WTC11 (cell line): ENCODE measurements at regions of chr1 and their contacts with region 1.

Region 1: GRCh38 chr1:207997486-207998268 is 86.8 kb upstream of the CD34 start:
- DNase-seq: peak; percentile 75
- ATAC-seq: peak; percentile 84
- H3K4me3 Mint-ChIP-seq: no peak overlapping the region
- H3K27ac Mint-ChIP-seq: no peak overlapping the region
- H3K4me1 Mint-ChIP-seq: peaks cover 25% of the 10 kb centered on the region
- H3K27me3 Mint-ChIP-seq: peaks cover 10% of the 10 kb centered on the region
- CTCF ChIP-seq: peak; percentile 63

Region 2: GRCh38 chr1:207848234-207848633 is 149.4 kb before region 1 on chr1:
- CTCF ChIA-PET with region 1: no interaction called
- POLR2A ChIA-PET with region 1: no interaction called
- DNase-seq: no peak
- ATAC-seq: no peak
- H3K4me3 Mint-ChIP-seq: no peak overlapping the region
- H3K27ac Mint-ChIP-seq: no peak overlapping the region
- H3K4me1 Mint-ChIP-seq: peaks cover 8% of the 10 kb centered on the region
- H3K27me3 Mint-ChIP-seq: no peaks in the 10 kb centered on the region
- CTCF ChIP-seq: no peak

Region 3: DNA sequence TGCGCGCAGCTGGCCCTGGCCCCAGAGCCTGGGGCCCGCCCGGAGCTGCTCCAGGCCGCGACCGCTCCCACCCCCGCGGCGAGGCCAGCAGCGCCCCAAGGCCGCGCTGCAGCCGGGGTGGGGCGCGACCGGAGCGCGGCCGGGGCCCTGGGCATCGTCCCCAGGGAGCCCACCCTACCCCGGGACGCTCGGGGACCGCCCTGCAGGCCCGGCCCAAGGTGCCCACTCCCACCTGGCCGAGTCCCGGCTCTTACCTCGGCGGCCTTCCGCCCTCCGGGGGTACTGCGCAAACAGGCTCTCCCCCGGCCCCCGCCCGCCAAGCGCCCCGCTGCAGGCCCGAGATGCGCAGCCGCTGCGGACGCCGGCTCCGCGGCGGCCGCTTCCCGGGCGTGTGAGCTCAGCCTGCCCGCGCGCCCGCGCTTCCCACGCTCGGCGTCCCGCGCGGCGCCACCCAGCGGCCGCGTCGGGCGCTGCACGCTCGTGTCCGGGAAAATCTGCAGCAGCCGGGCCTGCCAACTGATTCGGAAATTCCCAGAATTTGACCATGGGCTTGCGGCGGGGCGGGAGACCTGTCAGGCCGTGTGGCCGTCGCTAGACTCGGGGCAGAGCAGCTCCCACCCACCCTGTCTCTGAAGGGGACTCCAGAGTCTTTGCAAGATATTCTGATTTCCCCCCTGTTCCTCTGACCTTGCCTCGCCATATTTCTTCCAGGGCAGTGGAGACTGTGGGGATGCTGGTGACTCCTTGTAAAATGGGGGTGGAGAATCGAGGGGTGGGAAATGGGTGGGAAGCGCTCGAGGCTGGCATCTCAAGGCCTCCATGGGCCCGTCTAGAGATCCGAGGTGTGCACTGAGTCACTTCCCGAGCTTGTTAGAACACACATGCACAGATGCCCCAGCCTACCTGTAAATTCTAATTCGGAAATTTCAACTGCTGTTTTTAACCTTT is 128.6 kb before region 1 on chr1:
- CTCF ChIA-PET with region 1: interaction called, 11 read pairs
- POLR2A ChIA-PET with region 1: no interaction called
- DNase-seq: peak; percentile 72
- ATAC-seq: peak; percentile 65
- H3K4me3 Mint-ChIP-seq: peak overlapping the region; percentile 71
- H3K27ac Mint-ChIP-seq: no peak overlapping the region
- H3K4me1 Mint-ChIP-seq: peaks cover 18% of the 10 kb centered on the region
- H3K27me3 Mint-ChIP-seq: peaks cover 28% of the 10 kb centered on the region
- CTCF ChIP-seq: peak; percentile 60

Region 4: GRCh38 chr1:207952617-207953542 is 44.8 kb before region 1 on chr1:
- CTCF ChIA-PET with region 1: no interaction called
- POLR2A ChIA-PET with region 1: no interaction called
- DNase-seq: no peak
- ATAC-seq: no peak
- H3K4me3 Mint-ChIP-seq: no peak overlapping the region
- H3K27ac Mint-ChIP-seq: no peak overlapping the region
- H3K4me1 Mint-ChIP-seq: peaks cover 11% of the 10 kb centered on the region
- H3K27me3 Mint-ChIP-seq: peaks cover 24% of the 10 kb centered on the region
- CTCF ChIP-seq: no peak

Region 5: GRCh38 chr1:207981976-207982375 is 15.7 kb before region 1 on chr1:
- CTCF ChIA-PET with region 1: interaction called, 33 read pairs
- POLR2A ChIA-PET with region 1: no interaction called
- DNase-seq: peak; percentile 58
- ATAC-seq: peak; percentile 100
- H3K4me3 Mint-ChIP-seq: no peak overlapping the region
- H3K27ac Mint-ChIP-seq: no peak overlapping the region
- H3K4me1 Mint-ChIP-seq: no peaks in the 10 kb centered on the region
- H3K27me3 Mint-ChIP-seq: no peaks in the 10 kb centered on the region; the same call in none of the 2 replicates
- CTCF ChIP-seq: peak; percentile 73

Region 6: DNA sequence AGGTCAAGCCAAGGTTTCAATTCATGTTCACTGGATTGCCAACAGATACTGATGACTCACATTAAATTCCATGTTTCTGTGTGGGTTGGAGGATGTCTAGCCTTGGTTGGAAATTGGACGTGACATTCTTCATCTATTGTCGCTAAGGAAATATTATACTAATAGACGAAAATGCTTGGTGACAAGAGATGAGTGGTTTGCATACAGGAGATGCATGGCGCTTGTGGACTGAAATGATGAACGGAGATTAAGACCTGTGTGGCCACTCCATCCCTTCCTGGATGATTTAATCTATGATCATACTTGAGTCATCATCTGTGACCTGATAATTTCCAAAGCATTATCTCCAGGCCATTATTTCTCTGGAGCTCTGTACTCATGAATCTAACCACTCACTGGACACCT is 10.3 kb after region 1 on chr1:
- CTCF ChIA-PET with region 1: interaction called, 34 read pairs
- POLR2A ChIA-PET with region 1: no interaction called
- DNase-seq: no peak
- ATAC-seq: no peak
- H3K4me3 Mint-ChIP-seq: no peak overlapping the region
- H3K27ac Mint-ChIP-seq: no peak overlapping the region
- H3K4me1 Mint-ChIP-seq: no peaks in the 10 kb centered on the region
- H3K27me3 Mint-ChIP-seq: no peaks in the 10 kb centered on the region; the same call in 1 of the 2 replicates
- CTCF ChIP-seq: no peak

Region 7: GRCh38 chr1:208025031-208025430 is 27.4 kb after region 1 on chr1:
- CTCF ChIA-PET with region 1: interaction called, 22 read pairs
- POLR2A ChIA-PET with region 1: no interaction called
- DNase-seq: no peak
- ATAC-seq: no peak
- H3K4me3 Mint-ChIP-seq: no peak overlapping the region
- H3K27ac Mint-ChIP-seq: no peak overlapping the region
- H3K4me1 Mint-ChIP-seq: peaks cover 12% of the 10 kb centered on the region
- H3K27me3 Mint-ChIP-seq: 0 out of 2 replicates have a peak, but pooled peaks cover 3% of the 10 kb centered on the region
- CTCF ChIP-seq: no peak

Region 8: DNA sequence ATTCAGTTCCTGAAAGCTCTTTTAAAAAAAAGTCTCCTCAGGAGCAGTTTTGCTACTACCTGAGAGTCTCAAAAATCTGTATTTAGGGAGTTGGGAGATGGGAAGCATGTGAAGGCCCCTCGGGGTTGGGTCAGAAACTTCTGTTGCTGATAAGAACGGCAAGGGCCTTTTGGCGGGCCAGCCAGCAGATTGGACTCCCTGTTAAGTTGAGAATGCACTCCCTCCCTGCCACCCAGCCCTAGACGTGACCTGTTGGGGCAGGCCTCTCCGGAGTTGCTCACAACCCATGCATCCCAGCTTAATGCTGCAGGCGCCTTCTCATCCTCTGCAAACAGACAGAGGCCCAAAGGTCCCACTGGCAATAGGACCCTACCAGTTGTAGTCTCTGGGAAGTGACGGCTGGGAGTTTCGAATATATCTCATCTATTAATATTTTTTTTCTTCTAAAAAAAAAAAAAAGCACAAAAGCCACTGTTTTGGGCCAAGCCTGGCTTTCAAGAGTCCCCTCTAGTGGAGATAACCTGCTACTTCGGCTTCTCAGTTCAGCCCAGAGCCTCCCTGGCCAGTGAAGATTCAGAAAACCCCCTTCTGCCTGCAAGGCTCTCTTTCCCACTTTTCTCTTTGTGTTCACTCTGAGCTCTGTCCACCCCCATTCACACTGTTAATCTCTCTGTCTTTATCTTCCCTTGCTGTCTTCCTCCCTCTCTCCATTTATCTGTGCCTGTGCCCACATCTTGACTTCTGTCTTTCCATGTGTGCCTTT is 241.2 kb after region 1 on chr1:
- CTCF ChIA-PET with region 1: interaction called, 30 read pairs
- POLR2A ChIA-PET with region 1: no interaction called
- DNase-seq: peak; percentile 51
- ATAC-seq: peak; percentile 69
- H3K4me3 Mint-ChIP-seq: no peak overlapping the region
- H3K27ac Mint-ChIP-seq: no peak overlapping the region
- H3K4me1 Mint-ChIP-seq: peaks cover 47% of the 10 kb centered on the region
- H3K27me3 Mint-ChIP-seq: peaks cover 31% of the 10 kb centered on the region
- CTCF ChIP-seq: peak; percentile 64